ENCODE measurements at regions of chr17 and their contacts with region 1.

Region 1: DNA sequence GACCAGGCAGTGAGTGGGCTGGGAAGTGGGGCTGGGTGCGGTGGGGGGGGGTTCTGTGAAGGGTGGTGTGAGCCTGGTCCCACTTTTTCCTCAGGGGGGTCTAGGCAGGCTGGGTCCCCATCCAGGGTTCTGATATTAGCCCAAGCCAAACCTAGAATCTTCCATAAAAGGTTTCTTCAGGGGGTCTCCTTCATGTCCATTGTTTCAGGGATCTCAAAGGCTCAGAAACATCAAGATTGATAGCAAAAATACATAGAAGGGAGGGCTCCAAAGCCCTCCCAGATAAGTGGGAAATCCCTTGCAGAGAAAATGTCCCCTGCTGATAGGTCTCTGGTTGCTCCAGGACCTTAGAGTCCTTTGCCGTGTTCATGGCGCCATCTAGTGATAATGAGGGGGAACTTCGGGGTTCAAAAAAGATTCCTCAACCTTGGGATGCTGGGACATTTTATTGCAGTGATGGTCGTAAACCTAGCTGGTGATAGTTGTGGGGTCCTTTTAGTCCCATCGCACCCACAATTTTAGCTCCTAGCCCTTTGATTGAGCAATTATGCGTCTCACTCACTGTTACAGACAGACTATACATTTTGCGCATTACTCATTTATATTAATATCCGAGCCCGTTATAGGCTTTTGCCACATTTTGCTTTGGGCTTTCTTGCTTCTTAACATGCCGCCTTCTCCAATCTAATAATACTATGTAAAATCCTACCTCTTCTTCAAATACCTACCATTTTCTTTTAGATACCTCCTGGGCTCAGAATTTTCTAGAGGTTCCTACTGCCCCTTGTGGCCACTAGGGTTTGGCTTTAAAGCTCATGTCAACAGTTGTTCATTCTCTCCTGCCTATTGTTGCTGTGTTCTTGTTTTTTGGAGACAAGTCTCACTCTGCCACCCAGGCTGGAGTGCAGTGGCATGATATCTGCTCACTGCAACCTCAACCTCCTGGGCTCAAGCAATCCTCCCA is 35.1 kb downstream of the IGF2BP1 start:
- DNase-seq: peak in 9 of 14 experiments; percentile 6 to 71 (median 23)
- ATAC-seq: peak; percentile 75
- H3K4me3 ChIP-seq: no peak overlapping the region
- H3K4me3 Mint-ChIP-seq: no peak overlapping the region
- H3K27ac ChIP-seq: no peak overlapping the region
- H3K27ac Mint-ChIP-seq: no peak overlapping the region
- H3K4me1 ChIP-seq: no peaks in the 10 kb centered on the region
- H3K4me1 Mint-ChIP-seq: peaks cover 6% of the 10 kb centered on the region
- H3K27me3 ChIP-seq: peaks cover 3 to 6% of the 10 kb centered on the region in 2 experiments
- H3K27me3 Mint-ChIP-seq: peaks cover 18% of the 10 kb centered on the region
- CTCF ChIP-seq: peak; percentile 73

Region 2: GRCh38 chr17:48671697-48672171 is 360.5 kb before region 1 on chr17:
- CTCF ChIA-PET with region 1: interaction called, 3 read pairs
- POLR2A ChIA-PET with region 1: no interaction called
- intact Hi-C with region 1: loop called (anchors 1 to 5 kb)
- DNase-seq: peak; percentile 59 to 83 (median 65)
- ATAC-seq: peak; percentile 95
- H3K4me3 ChIP-seq: no peak overlapping the region
- H3K4me3 Mint-ChIP-seq: peak overlapping the region; percentile 3
- H3K27ac ChIP-seq: no peak overlapping the region
- H3K27ac Mint-ChIP-seq: no peak overlapping the region
- H3K4me1 ChIP-seq: peaks cover 7% of the 10 kb centered on the region
- H3K4me1 Mint-ChIP-seq: peaks cover 5% of the 10 kb centered on the region
- H3K27me3 ChIP-seq: peaks cover 9 to 13% of the 10 kb centered on the region in 2 experiments
- H3K27me3 Mint-ChIP-seq: peaks cover 73% of the 10 kb centered on the region
- CTCF ChIP-seq: peak; percentile 85

Region 3: DNA sequence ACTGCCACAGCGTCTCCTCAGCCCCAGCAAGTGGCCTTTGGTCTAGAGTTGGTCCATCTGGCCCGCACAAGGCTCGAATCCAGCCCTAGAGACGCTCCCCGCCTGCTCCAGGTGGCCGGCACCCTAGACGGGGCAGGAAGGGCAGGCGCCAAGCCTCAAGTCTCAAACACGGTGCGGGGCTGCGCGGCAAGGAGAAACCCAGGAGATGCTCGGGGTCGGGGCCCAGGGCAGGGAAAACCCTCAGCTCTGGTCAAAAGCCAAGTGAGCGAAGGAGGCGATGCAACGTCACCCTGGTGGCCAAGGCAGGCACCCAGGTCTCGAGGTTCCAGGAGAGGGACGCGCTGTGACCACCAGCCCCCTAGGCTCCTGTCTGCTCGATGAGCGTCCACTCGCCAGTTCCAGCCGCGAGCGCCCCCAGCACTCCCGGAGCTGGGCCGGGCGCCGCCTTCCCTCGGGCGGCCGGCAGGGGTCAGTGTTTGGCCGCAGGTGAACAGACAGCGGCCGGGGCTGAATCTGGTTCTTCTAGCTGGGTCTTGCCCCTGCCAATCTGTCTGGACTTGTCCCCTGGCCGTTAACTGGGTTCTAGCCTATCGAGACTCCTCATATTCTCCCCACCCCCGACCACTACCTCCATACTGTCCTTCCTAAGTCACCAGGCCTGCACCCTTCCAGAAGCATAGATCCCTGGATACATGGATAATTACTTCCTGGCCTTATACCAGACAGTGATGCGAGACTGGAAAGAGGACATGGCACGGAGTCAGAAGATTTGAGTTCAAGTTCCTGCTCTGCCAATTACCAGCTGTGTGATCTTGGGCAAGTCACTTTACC is 353.9 kb before region 1 on chr17:
- CTCF ChIA-PET with region 1: interaction called, 9 read pairs
- POLR2A ChIA-PET with region 1: no interaction called
- intact Hi-C with region 1: loop called (anchors 2 to 5 kb)
- DNase-seq: peak; percentile 39 to 82 (median 64)
- ATAC-seq: peak; percentile 94
- H3K4me3 ChIP-seq: no peak overlapping the region
- H3K4me3 Mint-ChIP-seq: no peak overlapping the region
- H3K27ac ChIP-seq: no peak overlapping the region
- H3K27ac Mint-ChIP-seq: no peak overlapping the region
- H3K4me1 ChIP-seq: peaks cover 8% of the 10 kb centered on the region
- H3K4me1 Mint-ChIP-seq: no peaks in the 10 kb centered on the region
- H3K27me3 ChIP-seq: peaks cover 12 to 18% of the 10 kb centered on the region in 2 experiments
- H3K27me3 Mint-ChIP-seq: peaks cover 81% of the 10 kb centered on the region
- CTCF ChIP-seq: peak; percentile 98

Region 4: GRCh38 chr17:48804925-48805411 is 227.3 kb before region 1 on chr17:
- CTCF ChIA-PET with region 1: no interaction called
- POLR2A ChIA-PET with region 1: no interaction called
- intact Hi-C with region 1: loop called (anchors 2 kb)
- DNase-seq: peak; percentile 44 to 79 (median 58)
- ATAC-seq: peak; percentile 89
- H3K4me3 ChIP-seq: no peak overlapping the region
- H3K4me3 Mint-ChIP-seq: no peak overlapping the region
- H3K27ac ChIP-seq: no peak overlapping the region
- H3K27ac Mint-ChIP-seq: no peak overlapping the region
- H3K4me1 ChIP-seq: peaks cover 4% of the 10 kb centered on the region
- H3K4me1 Mint-ChIP-seq: no peaks in the 10 kb centered on the region
- H3K27me3 ChIP-seq: peaks cover 0 to 8% of the 10 kb centered on the region in 2 experiments
- H3K27me3 Mint-ChIP-seq: peaks cover 23% of the 10 kb centered on the region
- CTCF ChIP-seq: peak; percentile 98

Region 5: GRCh38 chr17:48816774-48817590 is 215.3 kb before region 1 on chr17 and contains the start of gene TTLL6:
- CTCF ChIA-PET with region 1: no interaction called
- POLR2A ChIA-PET with region 1: no interaction called
- intact Hi-C with region 1: loop called in 1 of 2 experiments (anchors 1 kb)
- DNase-seq: peak; percentile 56 to 91 (median 78)
- ATAC-seq: peak; percentile 98
- H3K4me3 ChIP-seq: peak within 1 kb of the TSS; percentile 50
- H3K4me3 Mint-ChIP-seq: peak within 1 kb of the TSS; percentile 87
- H3K27ac ChIP-seq: no peak within 1 kb of the TSS
- H3K27ac Mint-ChIP-seq: no peak within 1 kb of the TSS
- H3K4me1 ChIP-seq: peaks cover 22% of the 10 kb centered on the region
- H3K4me1 Mint-ChIP-seq: peaks cover 22% of the 10 kb centered on the region
- H3K27me3 ChIP-seq: peaks cover 16 to 32% of the 10 kb centered on the region in 2 experiments
- H3K27me3 Mint-ChIP-seq: peaks cover 71% of the 10 kb centered on the region
- CTCF ChIP-seq: no peak
- total RNA-seq, gene TTLL6: not detected

Region 6: GRCh38 chr17:48985436-48986245 is 46.6 kb before region 1 on chr17:
- CTCF ChIA-PET with region 1: interaction called, 3 read pairs
- POLR2A ChIA-PET with region 1: no interaction called
- intact Hi-C with region 1: loop called in 1 of 2 experiments (anchors 1 kb)
- DNase-seq: no peak
- ATAC-seq: no peak
- H3K4me3 ChIP-seq: no peak overlapping the region
- H3K4me3 Mint-ChIP-seq: no peak overlapping the region
- H3K27ac ChIP-seq: no peak overlapping the region
- H3K27ac Mint-ChIP-seq: no peak overlapping the region
- H3K4me1 ChIP-seq: no peaks in the 10 kb centered on the region
- H3K4me1 Mint-ChIP-seq: no peaks in the 10 kb centered on the region
- H3K27me3 ChIP-seq: peaks cover 4 to 6% of the 10 kb centered on the region in 2 experiments
- H3K27me3 Mint-ChIP-seq: peaks cover 42% of the 10 kb centered on the region
- CTCF ChIP-seq: no peak

Region 7: DNA sequence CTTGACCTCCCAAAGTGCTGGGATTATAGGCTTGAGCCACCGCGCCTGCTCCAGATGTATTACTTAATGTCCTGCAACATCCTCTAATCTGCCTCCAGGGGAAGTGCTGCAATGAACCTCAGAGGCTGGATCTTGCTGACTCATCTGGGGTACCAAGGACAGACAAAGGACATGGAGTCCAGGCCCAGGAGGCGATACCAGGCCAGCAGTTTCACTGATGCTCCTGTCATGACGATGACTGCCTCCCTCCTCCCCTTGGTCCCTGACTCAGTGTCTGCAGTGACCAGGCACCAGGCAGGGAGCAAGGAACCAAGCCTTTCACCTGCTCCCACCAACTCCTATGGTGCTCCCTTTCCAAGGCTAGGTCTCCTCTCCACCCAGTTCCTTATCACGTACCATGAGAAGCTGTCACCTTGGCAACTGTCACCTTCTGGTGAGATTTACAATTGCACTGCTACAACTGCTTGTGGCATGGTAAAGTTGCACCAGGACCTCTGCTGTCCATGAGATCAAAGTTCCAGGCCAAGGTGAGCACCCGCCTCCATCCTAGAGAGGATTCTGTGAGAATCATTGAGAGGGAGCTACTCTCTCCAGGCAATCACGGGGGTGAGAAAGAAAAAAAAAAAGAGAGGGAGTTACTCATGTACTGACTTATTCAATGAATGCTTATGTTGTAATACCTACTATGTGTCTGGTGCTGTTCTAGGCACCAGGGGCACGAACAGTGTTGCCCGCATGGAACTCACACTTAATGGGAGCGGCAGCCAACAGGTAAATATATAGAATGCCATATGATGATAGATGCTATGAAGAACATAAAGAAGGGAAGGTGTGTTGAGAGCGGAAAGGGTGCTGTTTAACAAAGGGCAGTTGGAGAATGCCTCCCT is 220.1 kb after region 1 on chr17:
- CTCF ChIA-PET with region 1: no interaction called
- POLR2A ChIA-PET with region 1: no interaction called
- intact Hi-C with region 1: no loop called
- DNase-seq: peak in 2 of 14 experiments; percentile 46 to 58
- ATAC-seq: no peak
- H3K4me3 ChIP-seq: no peak overlapping the region
- H3K4me3 Mint-ChIP-seq: no peak overlapping the region
- H3K27ac ChIP-seq: no peak overlapping the region
- H3K27ac Mint-ChIP-seq: no peak overlapping the region
- H3K4me1 ChIP-seq: no peaks in the 10 kb centered on the region
- H3K4me1 Mint-ChIP-seq: no peaks in the 10 kb centered on the region
- H3K27me3 ChIP-seq: peaks cover 0 to 3% of the 10 kb centered on the region in 2 experiments
- H3K27me3 Mint-ChIP-seq: peaks cover 7% of the 10 kb centered on the region
- CTCF ChIP-seq: no peak